GM10248 (cell line): ENCODE measurements at regions of chr6 and their contacts with region 1.

Region 1: DNA sequence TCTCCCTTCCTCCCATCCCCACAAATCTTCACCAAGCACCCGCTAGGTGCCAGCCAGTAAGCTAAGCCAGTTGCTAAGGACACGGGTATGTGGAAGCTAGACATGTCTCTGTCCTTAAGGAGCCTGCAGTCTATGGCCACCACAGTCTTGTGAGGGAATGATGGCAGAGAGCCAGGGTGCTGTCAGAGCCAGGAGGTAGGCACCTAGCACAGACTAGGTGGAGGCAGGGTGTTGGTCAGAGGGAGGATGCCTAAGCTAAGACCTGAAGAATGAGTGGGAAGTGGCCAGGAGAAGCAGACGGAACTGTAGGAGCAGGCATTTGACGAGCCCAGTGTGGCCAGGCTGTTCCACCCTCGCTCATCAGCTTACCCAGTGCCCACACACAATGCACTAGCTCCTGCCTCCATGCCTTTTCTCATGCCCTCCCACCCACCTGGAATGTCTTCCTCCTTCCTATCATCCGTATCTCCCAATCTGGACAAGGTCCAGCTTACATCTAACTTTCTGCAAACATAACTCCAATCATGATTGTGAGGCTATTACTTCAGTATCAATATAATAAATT is 125.6 kb downstream of the FOXC1 start:
- DNase-seq: no peak
- CTCF ChIP-seq: no peak

Region 2: GRCh38 chr6:1724616-1725015 is 10.7 kb before region 1 on chr6:
- CTCF ChIA-PET with region 1: interaction called, 10 read pairs
- POLR2A ChIA-PET with region 1: no interaction called
- DNase-seq: no peak
- CTCF ChIP-seq: no peak